Activated T-helper 1 cell treated with anti-CD3 and anti-CD28 coated beads, Interleukin-12 subunit alpha, Interleukin-12 subunit beta, Interleukin-2, Interleukin-4 antibody, amounts not matched to agents 30 ng/mL and 10 ng/mL and 1 ng/mL, durations not matched to agents 14 hours and 24 hours and 36 hours (primary cell): ENCODE measurements at regions of chr17 and their contacts with region 1.

Region 1: DNA sequence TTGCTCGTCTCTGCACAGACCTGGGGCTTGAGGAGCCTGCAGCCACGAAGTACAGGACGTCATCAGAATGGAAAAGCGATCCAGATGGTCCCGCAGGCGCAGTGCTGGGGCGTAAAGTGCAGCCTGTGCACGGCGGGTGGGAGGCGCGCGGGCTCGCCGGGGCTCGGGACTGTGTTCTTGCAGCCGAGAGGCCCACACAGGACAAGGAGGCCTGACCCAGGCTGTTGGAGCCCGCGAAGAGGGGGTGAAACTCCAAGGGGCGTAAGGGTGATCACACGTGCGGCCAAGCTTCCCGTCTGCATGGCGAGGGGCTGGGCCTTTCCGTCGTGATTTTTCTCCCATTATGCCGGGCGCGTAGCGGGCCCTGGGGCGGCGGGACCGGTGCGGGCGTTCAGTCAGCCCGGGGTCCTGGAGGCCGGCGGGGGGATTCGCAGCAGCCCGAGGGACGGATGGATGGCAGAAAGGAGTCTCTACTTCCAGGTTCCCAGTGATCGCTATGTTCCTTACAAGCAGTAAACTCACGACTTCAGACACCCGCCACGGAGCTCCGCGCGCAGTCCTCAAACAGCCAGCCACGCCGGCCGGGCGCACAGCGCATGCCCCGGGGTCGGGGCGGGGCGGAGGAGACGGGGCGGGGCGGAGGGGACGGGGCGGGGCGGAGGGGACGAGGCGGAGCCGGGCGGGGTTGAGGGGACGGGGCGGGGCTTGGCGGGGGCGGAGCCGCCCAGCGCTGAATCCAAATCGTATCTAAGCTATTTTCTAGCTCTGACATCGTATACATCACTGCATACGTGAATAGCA is 141.0 kb upstream of the KCNJ18 start:
- DNase-seq: peak; percentile 66
- H3K4me3 Mint-ChIP-seq: peak overlapping the region; percentile 77
- H3K27ac Mint-ChIP-seq: peak overlapping the region; percentile 64
- H3K4me1 Mint-ChIP-seq: peaks cover 27% of the 10 kb centered on the region
- H3K27me3 Mint-ChIP-seq: peaks cover 29% of the 10 kb centered on the region

Region 2: DNA sequence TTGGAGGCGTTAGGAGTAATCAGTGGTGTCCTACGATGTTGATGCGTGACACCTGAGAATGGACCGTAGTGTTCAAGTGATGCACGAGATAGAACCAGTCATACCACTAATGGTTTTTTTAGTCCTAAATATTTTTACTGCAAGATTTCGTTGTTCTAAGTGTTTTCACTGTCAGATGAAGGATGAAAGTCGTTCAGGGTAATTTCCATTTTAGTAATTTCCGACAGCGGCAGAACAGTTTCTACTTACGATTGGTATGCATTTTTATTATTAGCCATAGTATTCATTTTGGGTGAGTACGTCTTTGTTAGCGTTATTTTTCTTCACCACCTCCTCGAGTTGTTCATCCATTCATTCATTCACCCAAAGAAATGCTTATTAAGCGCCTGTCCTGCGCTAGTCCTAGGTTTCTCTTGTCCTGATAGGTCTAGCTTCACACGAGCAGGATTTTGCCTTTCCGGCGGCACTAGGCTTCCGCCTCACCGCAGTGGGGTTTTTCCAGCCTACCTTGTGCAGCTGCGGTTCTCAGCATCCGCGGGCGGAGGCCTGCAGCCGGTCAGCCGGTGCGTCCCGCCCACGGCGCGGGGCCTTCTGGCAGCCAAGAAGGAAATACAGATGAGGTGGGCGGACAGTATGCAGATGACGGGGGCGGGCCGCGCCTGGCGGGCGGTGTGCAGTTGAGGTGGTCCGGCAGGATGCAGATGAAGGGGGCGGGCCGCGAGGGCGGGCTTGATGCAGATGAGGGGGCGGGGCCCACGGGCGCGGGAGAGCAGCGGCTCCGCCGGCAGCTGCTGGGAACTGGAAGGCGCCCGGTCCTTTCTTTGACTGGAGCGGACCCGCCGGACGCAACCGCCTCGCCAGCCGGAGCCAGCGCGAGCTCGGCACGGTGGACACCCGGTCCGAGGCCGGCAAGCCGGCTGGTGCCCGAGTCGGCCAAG is 1395.8 kb before region 1 on chr17:
- intact Hi-C with region 1: loop called (anchors 10 kb)
- DNase-seq: peak; percentile 96
- H3K4me3 Mint-ChIP-seq: no peak overlapping the region
- H3K27ac Mint-ChIP-seq: no peak overlapping the region
- H3K4me1 Mint-ChIP-seq: no peaks in the 10 kb centered on the region
- H3K27me3 Mint-ChIP-seq: peaks cover 16% of the 10 kb centered on the region

Region 3: DNA sequence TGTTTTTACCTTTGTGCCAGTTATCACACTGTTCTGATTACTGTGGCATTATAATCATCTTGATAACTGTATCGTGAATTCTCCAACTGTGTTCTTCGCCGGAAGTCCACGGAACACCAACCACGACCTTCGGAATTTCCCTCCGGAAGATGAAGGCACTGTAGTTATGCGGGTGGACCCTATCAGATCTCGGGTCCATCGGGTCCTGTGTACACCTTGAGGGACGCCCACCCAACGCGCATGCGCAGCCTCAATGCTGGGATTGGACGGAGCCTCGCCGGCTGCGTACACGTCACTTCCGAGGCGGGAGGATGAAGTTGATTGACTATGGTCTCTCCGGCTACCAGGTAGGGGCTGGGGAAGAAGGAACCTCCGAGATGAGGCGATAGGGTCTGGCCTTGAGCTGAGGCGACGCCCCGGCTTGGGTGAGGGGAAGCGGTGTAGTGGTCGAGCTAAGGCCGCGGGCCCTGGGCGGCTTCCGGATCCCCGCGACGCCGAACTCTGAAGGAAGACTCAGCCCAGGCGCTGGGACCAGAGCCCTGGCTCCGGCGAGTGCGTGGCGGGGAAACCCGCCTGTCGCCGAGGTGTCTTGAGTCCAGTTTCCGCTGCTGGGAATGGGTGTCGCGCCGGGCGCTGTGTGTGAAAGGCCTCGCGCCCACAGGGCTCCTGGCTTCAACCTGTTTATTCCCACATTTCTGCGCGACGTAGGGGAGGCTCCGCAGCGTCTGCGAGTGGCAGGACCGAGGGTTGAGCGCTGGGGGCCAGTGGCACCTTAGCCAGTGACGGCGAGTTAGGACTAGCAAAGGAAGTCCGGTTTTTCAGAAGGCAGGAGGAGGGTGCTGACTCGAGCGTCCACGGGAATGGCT is 424.4 kb before region 1 on chr17 and contains the start of gene DHRS7B:
- intact Hi-C with region 1: loop called (anchors 1 kb)
- DNase-seq: peak; percentile 96
- H3K4me3 Mint-ChIP-seq: peak within 1 kb of the TSS; percentile 95
- H3K27ac Mint-ChIP-seq: peak within 1 kb of the TSS; percentile 95
- H3K4me1 Mint-ChIP-seq: peaks cover 44% of the 10 kb centered on the region
- H3K27me3 Mint-ChIP-seq: peaks cover 3% of the 10 kb centered on the region
- total RNA-seq, gene DHRS7B: 20.0 and 23.6 TPM in 2 replicates

Region 4: GRCh38 chr17:21318439-21318838 is 232.8 kb before region 1 on chr17:
- intact Hi-C with region 1: loop called (anchors 5 kb)
- DNase-seq: no peak
- H3K4me3 Mint-ChIP-seq: no peak overlapping the region
- H3K27ac Mint-ChIP-seq: no peak overlapping the region
- H3K4me1 Mint-ChIP-seq: no peaks in the 10 kb centered on the region
- H3K27me3 Mint-ChIP-seq: peaks cover 3% of the 10 kb centered on the region

Region 5: DNA sequence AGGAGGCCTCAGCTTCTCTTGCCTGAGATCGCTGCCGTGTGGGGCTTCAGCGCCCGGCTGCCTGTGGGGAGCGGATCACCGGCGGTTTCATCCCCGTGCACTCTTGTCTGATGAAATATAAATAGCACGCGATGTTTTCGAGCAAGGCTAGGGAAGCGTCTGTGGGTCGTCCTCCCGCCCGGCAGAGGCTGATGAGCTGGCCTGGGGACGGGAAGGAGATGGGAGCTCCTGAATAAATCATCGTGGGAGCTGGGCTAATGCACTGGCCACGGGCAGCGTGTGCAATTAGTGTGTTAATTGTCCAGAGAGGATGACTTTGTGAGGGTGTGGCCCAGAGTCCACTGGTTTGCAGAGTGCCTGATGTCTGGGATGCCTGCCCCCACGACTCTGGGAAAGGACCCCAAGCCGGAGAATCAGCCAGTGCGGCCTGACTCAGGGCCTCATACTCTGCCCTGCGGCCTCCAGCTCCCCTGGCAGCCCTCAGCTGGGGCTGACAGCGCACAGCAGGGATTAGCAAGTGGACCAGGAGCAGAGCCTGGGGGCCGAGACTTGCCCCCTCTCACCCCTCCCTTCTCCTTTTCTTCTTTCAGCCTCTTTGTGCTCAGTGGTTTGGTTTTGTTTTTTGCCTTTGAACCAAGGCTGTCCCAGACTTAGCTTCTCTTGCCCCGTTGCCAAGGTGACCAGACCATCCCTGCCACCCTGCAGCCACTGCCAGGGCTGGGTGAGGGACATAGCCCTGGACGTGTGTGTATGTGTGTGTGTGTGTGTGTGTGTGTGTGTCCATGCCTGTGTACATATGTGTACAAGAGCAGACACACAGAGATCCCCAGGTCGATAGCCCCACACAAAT is 153.7 kb before region 1 on chr17:
- intact Hi-C with region 1: no loop called
- DNase-seq: no peak
- H3K4me3 Mint-ChIP-seq: no peak overlapping the region
- H3K27ac Mint-ChIP-seq: no peak overlapping the region
- H3K4me1 Mint-ChIP-seq: no peaks in the 10 kb centered on the region
- H3K27me3 Mint-ChIP-seq: no peaks in the 10 kb centered on the region

Region 6: GRCh38 chr17:21511363-21512198 is 39.7 kb before region 1 on chr17:
- intact Hi-C with region 1: loop called (anchors 2 kb)
- DNase-seq: peak; percentile 37
- H3K4me3 Mint-ChIP-seq: peak overlapping the region; percentile 70
- H3K27ac Mint-ChIP-seq: no peak overlapping the region
- H3K4me1 Mint-ChIP-seq: peaks cover 18% of the 10 kb centered on the region
- H3K27me3 Mint-ChIP-seq: peaks cover 66% of the 10 kb centered on the region